Mammary epithelial cell (primary cell): ENCODE measurements at regions of chr6 and their contacts with region 1.

Region 1: DNA sequence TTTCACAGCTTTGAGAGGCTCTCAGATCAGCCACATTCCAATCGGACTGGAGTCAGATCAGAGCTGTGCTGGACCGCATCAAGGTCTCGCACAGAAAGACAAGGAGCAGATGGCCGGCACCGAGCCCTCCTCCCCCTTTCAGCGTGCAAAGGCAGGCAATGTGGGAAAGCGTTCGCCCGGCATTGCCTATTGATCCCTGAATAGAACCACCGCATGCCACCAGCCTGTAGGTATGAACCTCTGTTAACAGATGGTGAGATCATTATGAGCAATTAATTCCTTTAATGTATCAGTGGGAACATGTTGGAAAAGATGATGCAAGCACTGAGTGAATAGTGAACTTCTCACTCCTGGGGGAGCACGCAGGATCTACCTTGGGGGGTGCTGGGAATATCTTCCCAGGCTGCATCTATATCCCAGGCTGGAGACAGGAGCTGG is 117.5 kb upstream of the ID4 start:
- DNase-seq: peak; percentile 19
- H3K4me3 ChIP-seq: no peak overlapping the region
- H3K27ac ChIP-seq: no peak overlapping the region
- H3K4me1 ChIP-seq: peaks cover 6% of the 10 kb centered on the region
- H3K27me3 ChIP-seq: no peaks in the 10 kb centered on the region
- CTCF ChIP-seq: no peak

Region 2: DNA sequence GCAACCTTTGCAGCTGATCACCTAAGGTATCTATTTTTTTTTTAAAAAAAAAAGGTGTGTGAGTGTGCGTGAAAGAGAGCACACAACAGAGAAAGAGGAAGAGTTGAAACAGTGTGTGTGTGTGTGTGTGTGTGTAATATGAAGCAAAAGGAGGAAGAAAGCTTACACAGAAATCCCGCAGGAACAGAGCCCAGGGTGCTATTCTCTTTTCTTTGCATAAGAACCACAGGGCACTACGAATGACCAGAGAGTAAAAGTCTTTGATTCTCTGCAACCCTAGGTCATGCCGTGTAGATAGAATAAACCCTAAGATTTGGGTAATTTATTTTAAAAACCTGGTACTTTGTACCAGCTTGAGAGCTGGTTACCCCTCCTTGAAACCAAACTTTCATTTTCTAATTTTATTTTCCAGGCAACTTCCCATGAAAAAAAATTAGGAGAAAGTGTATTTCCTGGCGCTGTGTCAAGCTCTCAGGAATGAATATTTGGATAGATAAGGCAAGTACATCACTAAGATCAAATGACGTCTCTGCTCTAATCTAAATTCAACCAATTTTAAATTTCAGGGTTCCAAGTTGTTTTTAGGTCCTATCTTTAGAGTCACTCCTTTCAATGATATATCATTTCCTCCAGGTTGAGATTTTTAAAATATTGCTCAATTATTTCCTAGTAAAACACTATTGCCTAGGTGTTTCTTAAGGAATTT is 69.5 kb after region 1 on chr6:
- CTCF ChIA-PET with region 1: no interaction called
- dilution Hi-C with region 1: no loop called
- in situ Hi-C with region 1: no loop called
- intact Hi-C with region 1: no loop called
- DNase-seq: no peak
- H3K4me3 ChIP-seq: no peak overlapping the region
- H3K27ac ChIP-seq: no peak overlapping the region
- H3K4me1 ChIP-seq: no peaks in the 10 kb centered on the region
- H3K27me3 ChIP-seq: no peaks in the 10 kb centered on the region
- CTCF ChIP-seq: no peak

Region 3: DNA sequence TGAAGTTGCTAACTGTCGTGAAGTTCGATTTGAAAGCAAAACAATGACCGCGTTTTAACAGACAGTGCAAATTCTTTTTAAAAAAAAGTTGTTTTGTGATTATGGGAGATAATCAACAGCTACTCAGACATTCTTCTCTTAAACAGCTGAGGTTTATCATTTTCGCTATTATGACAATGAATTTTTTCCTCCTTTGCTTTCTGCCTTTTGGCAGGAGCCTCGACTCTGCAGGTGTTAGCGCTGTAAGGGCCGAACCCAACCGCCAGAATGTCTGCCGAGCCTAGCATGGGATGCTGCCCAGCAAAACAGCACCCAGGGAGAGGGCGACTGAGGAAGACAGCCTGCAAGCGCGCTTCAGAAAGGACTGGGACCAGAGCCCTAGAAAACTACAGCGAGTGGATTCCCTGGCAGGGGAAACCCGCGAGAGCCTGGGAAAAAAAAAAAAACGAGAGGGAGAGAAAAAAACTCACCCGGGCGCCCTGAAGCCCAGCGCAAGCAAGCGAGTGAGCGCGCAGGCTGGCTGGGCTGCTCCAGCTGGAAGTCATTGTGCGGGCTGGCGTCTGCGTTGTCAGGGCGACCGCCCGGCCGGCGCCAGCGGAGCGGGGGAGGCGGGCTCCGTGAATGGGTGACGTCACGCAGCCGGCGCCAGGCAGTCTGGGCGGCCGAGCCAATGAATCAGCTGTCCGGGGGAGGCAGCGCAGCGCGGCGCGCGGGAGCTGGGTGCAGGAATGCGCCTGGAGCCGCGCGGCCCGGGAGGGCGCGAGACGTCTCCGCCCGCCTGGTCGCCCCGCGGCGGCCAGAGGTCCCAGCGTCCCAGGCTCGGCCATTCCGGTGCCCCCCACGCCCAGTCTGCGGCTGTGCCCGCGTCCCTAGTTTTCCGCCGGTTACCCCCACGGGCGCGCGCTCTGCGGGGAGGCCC is 84.8 kb after region 1 on chr6:
- CTCF ChIA-PET with region 1: no interaction called
- dilution Hi-C with region 1: no loop called
- in situ Hi-C with region 1: no loop called
- intact Hi-C with region 1: loop called (anchors 10 kb)
- DNase-seq: peak; percentile 91
- H3K4me3 ChIP-seq: peak overlapping the region; percentile 53 to 59 (median 56)
- H3K27ac ChIP-seq: peak overlapping the region; percentile 30
- H3K4me1 ChIP-seq: peaks cover 3% of the 10 kb centered on the region
- H3K27me3 ChIP-seq: peaks cover 6% of the 10 kb centered on the region
- CTCF ChIP-seq: peak in 1 of 2 donors; percentile 1